HCT116 (cell line): ENCODE measurements at regions of chr4 and their contacts with region 1.

Region 1: GRCh38 chr4:17447675-17448298 is 64.1 kb downstream of the QDPR start:
- DNase-seq: peak; percentile 74
- ATAC-seq: peak; percentile 99
- H3K4me3 ChIP-seq: no peak overlapping the region
- H3K27ac ChIP-seq: no peak overlapping the region
- H3K4me1 ChIP-seq: no peaks in the 10 kb centered on the region
- H3K27me3 ChIP-seq: no peaks in the 10 kb centered on the region; the same call in 1 of the 2 replicates
- CTCF ChIP-seq: peak; percentile 66 to 86 (median 75); a peak in 5 of 6 replicates
- POLR2A ChIP-seq: no peak
- RAD21 ChIP-seq: peak; percentile 90

Region 2: DNA sequence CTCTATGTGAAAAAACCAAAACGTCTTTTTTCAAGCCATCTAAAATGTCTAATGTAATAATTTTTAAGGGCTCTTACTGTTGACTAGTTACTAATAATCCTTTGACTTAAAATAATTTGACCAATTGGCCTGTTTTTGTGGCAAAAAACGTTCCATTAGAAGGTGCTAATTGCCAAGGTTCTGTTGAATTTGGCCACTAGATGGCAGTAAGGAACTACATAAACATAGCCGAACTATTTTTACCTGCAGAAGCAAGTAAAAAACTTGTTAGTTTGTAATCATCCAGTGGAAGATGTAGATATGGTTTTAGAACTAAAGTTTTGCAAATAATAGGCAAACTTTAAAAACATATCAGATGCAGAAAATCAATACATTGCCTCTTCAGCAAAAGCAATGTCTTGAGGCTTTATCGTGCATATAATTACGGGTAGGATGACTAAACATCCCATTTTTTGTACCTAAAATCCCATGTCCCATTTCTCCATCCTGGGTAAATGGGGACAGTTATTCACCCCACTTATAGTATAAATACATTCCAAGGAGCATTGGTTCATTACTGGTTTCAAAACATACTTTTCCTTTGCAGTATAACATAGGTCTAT is 1421.5 kb before region 1 on chr4:
- CTCF ChIA-PET with region 1: no interaction called
- POLR2A ChIA-PET with region 1: no interaction called
- RAD21 ChIA-PET with region 1: no interaction called
- intact Hi-C with region 1: loop called (anchors 10 kb)
- DNase-seq: peak; percentile 48
- ATAC-seq: peak; percentile 42; the same call in 1 of the 2 replicates
- H3K4me3 ChIP-seq: no peak overlapping the region
- H3K27ac ChIP-seq: no peak overlapping the region
- H3K4me1 ChIP-seq: no peaks in the 10 kb centered on the region
- H3K27me3 ChIP-seq: no peaks in the 10 kb centered on the region
- CTCF ChIP-seq: peak; percentile 65 to 95 (median 76)
- POLR2A ChIP-seq: no peak
- RAD21 ChIP-seq: peak; percentile 85

Region 3: DNA sequence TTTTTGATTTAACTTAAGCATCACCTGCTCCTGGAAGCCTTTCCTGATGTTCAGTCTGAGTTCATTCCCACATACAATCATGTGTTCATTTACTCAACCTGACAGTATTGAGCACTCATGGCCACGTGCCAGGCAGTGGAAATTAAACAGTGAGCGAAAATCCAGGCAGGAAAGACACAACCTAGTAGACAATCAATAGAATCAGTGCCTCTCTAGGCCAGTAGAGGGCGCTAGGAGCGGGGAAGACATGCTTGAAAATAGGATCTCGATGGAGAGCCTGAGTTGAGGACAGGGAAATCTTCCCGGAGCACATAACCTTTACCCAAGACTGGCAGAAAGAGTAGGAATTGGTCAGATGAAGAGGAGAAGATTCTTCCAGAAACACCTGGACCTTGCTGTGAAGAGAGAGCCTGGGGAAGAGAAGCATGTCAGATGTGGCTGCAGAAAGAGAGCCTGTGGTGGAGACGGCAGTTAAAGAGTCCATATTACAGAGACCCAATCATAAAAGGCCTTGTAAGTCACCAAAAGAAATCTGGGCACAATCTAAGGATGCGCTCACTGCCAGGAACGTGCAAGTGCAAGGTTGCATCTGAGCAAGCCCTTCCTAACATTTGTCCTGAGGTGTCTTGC is 652.9 kb before region 1 on chr4:
- CTCF ChIA-PET with region 1: no interaction called
- POLR2A ChIA-PET with region 1: no interaction called
- RAD21 ChIA-PET with region 1: no interaction called
- intact Hi-C with region 1: loop called (anchors 5 kb)
- DNase-seq: peak; percentile 34
- ATAC-seq: peak; percentile 60
- H3K4me3 ChIP-seq: no peak overlapping the region
- H3K27ac ChIP-seq: no peak overlapping the region
- H3K4me1 ChIP-seq: no peaks in the 10 kb centered on the region
- H3K27me3 ChIP-seq: peaks cover 12% of the 10 kb centered on the region; the same call in 1 of the 2 replicates
- CTCF ChIP-seq: peak; percentile 47 to 81 (median 77); a peak in 5 of 6 replicates
- POLR2A ChIP-seq: no peak
- RAD21 ChIP-seq: peak; percentile 54

Region 4: DNA sequence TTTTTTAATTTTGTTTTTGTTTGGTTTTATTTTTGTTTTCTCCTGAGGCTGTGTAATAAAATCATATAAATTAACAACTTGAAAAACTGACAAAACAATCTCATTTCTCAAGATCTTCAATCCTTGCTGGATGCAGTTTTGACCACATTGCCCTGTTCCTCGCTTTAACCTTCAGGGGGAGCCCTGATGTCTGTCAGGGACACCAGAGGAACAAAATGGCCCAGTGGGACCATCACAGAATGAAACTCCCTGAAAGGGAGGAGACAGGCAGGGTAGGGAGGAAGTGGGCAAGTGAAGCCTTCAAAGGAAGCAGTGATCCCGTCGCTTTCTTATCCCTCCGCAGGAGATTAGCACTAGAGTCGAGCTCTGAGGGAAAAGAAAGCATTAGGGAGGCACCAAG is 274.5 kb before region 1 on chr4:
- CTCF ChIA-PET with region 1: no interaction called
- POLR2A ChIA-PET with region 1: no interaction called
- RAD21 ChIA-PET with region 1: no interaction called
- intact Hi-C with region 1: no loop called
- DNase-seq: no peak
- ATAC-seq: peak; percentile 69
- H3K4me3 ChIP-seq: no peak overlapping the region
- H3K27ac ChIP-seq: no peak overlapping the region
- H3K4me1 ChIP-seq: peaks cover 8% of the 10 kb centered on the region in 2 experiments; a peak in 3 of 4 replicates
- H3K27me3 ChIP-seq: no peaks in the 10 kb centered on the region
- CTCF ChIP-seq: peak; percentile 14 to 52 (median 46); a peak in 5 of 6 replicates
- POLR2A ChIP-seq: no peak
- RAD21 ChIP-seq: peak; percentile 42

Region 5: DNA sequence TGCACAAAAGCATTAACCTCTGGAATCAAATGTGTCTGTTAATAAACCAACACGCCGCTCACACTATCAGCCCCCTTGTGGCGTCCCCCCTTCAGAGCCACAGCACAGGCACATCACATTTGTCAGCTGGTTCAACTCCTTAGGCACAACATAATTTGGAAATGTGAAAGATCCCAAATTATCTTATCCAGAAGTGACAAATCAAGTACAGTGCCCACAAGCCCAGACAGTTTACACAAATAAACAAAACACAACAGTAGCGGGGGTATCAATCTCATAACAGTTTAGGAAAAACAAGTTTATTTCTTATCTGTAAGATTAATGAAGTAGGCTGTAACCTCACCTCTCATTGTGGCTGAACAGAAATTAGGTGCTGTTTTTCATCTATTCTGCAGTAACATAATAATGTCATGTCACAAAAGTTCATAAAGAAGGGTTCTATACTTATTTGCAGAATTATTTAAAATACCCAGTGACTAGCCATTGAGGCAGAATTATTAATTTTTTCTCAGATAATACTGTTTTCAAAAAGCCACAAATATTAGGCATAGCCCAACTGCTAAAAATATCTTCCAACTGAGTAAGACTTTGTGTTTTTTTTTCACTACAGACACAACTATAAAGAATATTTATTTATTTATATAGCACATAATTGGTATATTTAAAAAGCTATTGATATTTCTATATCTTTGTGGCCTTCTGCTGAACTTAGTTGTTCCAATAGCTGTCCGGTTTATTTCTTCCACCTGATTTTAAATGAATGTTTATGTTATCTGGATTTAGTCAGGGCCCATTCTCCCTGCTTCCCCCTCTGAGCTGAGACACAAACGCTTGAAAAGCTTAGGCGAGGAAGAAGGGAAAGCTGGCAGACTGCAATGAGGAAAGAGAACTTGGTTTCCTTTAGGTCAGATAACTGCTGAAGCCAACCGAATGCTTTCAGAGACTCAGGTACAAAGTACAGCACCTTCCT is 150.6 kb before region 1 on chr4:
- CTCF ChIA-PET with region 1: no interaction called
- POLR2A ChIA-PET with region 1: no interaction called
- RAD21 ChIA-PET with region 1: no interaction called
- intact Hi-C with region 1: no loop called
- DNase-seq: no peak
- ATAC-seq: no peak
- H3K4me3 ChIP-seq: no peak overlapping the region
- H3K27ac ChIP-seq: no peak overlapping the region
- H3K4me1 ChIP-seq: no peaks in the 10 kb centered on the region
- H3K27me3 ChIP-seq: peaks cover 8% of the 10 kb centered on the region
- CTCF ChIP-seq: no peak
- POLR2A ChIP-seq: no peak
- RAD21 ChIP-seq: no peak

Region 6: DNA sequence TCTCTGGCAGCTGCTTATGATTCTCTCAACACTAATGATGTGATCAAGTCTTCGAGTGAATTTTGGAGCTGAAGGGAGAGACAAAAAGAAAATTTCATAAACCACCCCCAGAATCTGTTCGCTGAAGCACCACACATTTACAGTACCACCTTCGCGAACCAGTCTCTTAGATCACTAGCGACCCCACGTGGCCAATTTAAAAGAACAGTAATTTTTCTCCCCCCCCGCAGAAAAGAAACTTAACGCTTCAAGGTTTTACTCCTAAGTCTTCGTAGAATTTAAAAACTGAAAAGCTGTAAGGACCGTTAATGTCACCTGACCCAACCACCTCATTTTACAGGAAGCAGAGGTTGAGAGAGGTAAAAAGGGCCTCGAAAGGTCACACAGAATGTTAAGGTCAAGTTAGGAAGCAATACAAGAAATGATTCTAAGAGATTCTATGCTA is 123.4 kb before region 1 on chr4:
- CTCF ChIA-PET with region 1: interaction called, 13 read pairs
- POLR2A ChIA-PET with region 1: no interaction called
- RAD21 ChIA-PET with region 1: no interaction called
- intact Hi-C with region 1: no loop called
- DNase-seq: peak; percentile 29
- ATAC-seq: peak; percentile 70
- H3K4me3 ChIP-seq: no peak overlapping the region
- H3K27ac ChIP-seq: no peak overlapping the region
- H3K4me1 ChIP-seq: no peaks in the 10 kb centered on the region; a peak in 1 of 4 replicates
- H3K27me3 ChIP-seq: 0 out of 2 replicates have a peak, but pooled peaks cover 3% of the 10 kb centered on the region
- CTCF ChIP-seq: peak; percentile 61 to 83 (median 80)
- POLR2A ChIP-seq: no peak
- RAD21 ChIP-seq: peak; percentile 85

Region 7: DNA sequence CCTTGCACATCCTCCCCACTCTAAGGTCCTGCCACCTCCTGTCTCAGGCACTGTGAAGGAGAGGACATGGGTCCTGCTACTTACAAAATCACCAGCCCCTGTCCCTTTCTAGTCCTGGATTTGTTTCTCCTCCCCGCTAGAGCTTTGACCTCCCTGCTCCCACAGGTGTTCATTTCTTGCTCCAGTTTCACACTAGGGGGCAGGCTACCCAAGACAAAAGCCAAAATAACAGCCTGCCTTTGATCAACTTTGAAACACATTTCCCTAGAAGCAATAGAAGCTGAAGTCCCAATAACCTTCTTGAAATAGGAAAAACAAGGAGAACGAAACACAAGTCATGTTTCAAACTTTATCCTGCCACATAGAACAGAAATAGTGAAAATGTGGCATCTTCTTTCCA is 100.3 kb before region 1 on chr4:
- CTCF ChIA-PET with region 1: interaction called, 54 read pairs
- POLR2A ChIA-PET with region 1: no interaction called
- RAD21 ChIA-PET with region 1: interaction called, 3 to 14 read pairs
- intact Hi-C with region 1: loop called (anchors 1 kb)
- DNase-seq: peak; percentile 16
- ATAC-seq: peak; percentile 87
- H3K4me3 ChIP-seq: no peak overlapping the region
- H3K27ac ChIP-seq: no peak overlapping the region
- H3K4me1 ChIP-seq: no peaks in the 10 kb centered on the region
- H3K27me3 ChIP-seq: no peaks in the 10 kb centered on the region
- CTCF ChIP-seq: peak; percentile 65 to 75 (median 68); a peak in 5 of 6 replicates
- POLR2A ChIP-seq: no peak
- RAD21 ChIP-seq: peak; percentile 77